ENCODE measurements at regions of chr12 and their contacts with region 1.

Region 1: GRCh38 chr12:13947276-13947946 is 34.0 kb downstream of the GRIN2B start:
- DNase-seq: no peak
- ATAC-seq: no peak
- H3K4me3 ChIP-seq: no peak overlapping the region
- H3K27ac ChIP-seq: no peak overlapping the region
- H3K4me1 ChIP-seq: no peaks in the 10 kb centered on the region
- H3K27me3 ChIP-seq: no peaks in the 10 kb centered on the region
- CTCF ChIP-seq: no peak

Region 2: GRCh38 chr12:13784504-13784903 is 162.9 kb before region 1 on chr12:
- intact Hi-C with region 1: no loop called
- DNase-seq: no peak
- ATAC-seq: no peak
- H3K4me3 ChIP-seq: no peak overlapping the region
- H3K27ac ChIP-seq: no peak overlapping the region
- H3K4me1 ChIP-seq: no peaks in the 10 kb centered on the region
- H3K27me3 ChIP-seq: no peaks in the 10 kb centered on the region
- CTCF ChIP-seq: no peak

Region 3: DNA sequence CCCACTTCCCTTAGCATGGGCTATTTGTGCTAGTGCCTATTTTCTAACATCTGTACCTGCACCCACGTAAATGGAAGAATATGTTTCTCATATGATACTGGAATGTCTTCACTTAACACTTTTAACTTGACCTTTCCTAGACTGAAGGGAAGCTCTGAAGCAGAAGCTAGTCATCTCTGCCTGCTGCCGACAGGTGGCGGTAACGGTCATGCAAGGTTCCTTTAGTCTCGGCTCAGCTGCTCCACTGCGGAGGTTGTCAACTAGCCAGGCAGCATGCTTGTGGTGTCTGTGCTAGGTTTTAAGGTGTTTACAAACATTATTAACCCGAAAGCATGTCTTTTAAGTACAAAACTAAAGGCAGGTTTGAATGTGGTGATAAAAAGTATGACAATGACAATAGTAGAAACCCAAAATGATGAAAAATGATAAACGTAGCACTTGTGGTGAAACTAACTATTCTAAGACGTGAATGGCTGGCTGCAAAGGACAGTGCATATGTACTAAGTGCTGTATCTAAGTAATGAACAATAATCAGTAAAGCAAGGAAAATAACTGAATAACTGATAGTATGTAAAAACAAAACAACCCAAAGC is 83.2 kb before region 1 on chr12:
- intact Hi-C with region 1: loop called in 1 of 3 experiments (anchors 5 kb)
- DNase-seq: peak; percentile 64 to 89 (median 81)
- ATAC-seq: peak; percentile 95 to 99 (median 98)
- H3K4me3 ChIP-seq: no peak overlapping the region
- H3K27ac ChIP-seq: no peak overlapping the region
- H3K4me1 ChIP-seq: no peaks in the 10 kb centered on the region
- H3K27me3 ChIP-seq: no peaks in the 10 kb centered on the region
- CTCF ChIP-seq: peak; percentile 68 to 92 (median 79)

Measured in pancreas (tissue), 10 donors.